ENCODE measurements at regions of chr13 and their contacts with region 1.

Region 1: DNA sequence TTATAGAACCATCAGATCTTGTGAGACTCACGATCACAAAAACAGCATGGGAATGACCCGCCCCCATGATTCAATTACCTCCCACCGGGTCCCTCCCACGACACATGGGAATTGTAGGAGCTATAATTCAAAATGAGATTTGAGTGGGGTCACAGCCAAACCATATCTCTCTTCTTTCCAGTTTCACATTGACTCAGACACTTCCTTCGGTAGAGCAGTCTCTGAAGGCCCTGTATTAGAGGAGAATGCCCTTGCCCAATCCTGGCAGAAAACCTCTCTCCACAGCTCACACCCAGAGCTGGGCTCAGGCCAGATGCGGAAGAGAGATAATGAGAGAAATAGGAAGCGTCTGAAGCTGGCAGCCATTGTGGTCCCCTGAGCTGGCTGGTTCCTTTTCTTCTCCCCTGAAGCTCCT is 72.4 kb upstream of the CLDN10 start:
- DNase-seq: peak; percentile 27
- ATAC-seq: peak; percentile 44
- H3K4me3 Mint-ChIP-seq: no peak overlapping the region
- H3K27ac Mint-ChIP-seq: no peak overlapping the region
- H3K4me1 Mint-ChIP-seq: peaks cover 8% of the 10 kb centered on the region
- H3K27me3 Mint-ChIP-seq: no peaks in the 10 kb centered on the region

Region 2: GRCh38 chr13:94660695-94661326 is 819.3 kb before region 1 on chr13:
- CTCF ChIA-PET with region 1: no interaction called
- POLR2A ChIA-PET with region 1: no interaction called
- intact Hi-C with region 1: loop called in 1 of 2 experiments (anchors 5 kb)
- DNase-seq: peak; percentile 42
- ATAC-seq: peak; percentile 24
- H3K4me3 Mint-ChIP-seq: no peak overlapping the region
- H3K27ac Mint-ChIP-seq: no peak overlapping the region
- H3K4me1 Mint-ChIP-seq: peaks cover 37% of the 10 kb centered on the region
- H3K27me3 Mint-ChIP-seq: peaks cover 31% of the 10 kb centered on the region

Region 3: GRCh38 chr13:95181586-95181985 is 298.6 kb before region 1 on chr13:
- CTCF ChIA-PET with region 1: no interaction called
- POLR2A ChIA-PET with region 1: no interaction called
- intact Hi-C with region 1: loop called in 1 of 2 experiments (anchors 1 kb)
- DNase-seq: no peak
- ATAC-seq: peak; percentile 45
- H3K4me3 Mint-ChIP-seq: no peak overlapping the region
- H3K27ac Mint-ChIP-seq: peak overlapping the region; percentile 14
- H3K4me1 Mint-ChIP-seq: peaks cover 73% of the 10 kb centered on the region
- H3K27me3 Mint-ChIP-seq: no peaks in the 10 kb centered on the region

Region 4: DNA sequence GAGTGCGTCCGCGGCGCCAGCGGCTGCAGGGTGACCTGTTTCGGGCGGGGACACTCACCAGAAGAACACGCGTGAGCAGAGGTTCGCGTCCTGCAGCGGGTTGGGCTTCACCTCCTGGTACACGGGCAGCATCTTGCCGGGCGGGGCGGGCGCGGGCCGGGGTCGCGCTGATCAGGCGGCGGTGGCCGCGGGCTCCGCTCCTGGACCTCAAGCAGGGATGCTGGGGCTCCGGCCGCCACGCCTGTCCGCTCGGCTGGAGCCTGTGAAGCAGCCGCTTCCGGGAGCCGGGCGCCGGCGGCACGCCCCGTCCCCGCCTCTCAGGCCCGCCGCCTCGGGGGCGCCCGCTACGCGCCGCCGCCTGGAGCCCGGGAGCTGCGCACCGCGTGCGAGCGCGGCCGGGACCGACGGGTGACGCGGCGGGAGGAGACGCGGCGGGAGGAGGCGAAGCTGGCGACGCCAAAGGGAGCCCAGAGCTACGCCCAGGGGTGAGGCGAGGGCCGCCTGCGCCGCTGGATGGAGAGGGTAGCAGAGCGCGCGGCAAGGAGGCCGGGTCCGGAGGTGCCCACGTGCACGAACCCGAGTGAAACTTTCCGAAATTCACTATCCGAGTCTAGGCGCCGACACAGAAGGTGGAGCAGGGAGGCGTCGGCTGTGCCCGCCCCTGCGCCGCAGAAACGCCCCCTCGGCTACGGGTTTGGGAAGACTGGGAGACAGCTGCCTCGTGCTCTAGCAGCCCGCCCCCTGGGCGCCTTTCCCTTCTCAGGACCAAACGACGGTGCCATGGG is 178.8 kb before region 1 on chr13 and contains the start of gene ABCC4:
- CTCF ChIA-PET with region 1: interaction called, 3 read pairs
- POLR2A ChIA-PET with region 1: no interaction called
- intact Hi-C with region 1: loop called (anchors 1 to 5 kb)
- DNase-seq: peak; percentile 76
- ATAC-seq: peak; percentile 81
- H3K4me3 Mint-ChIP-seq: peak within 1 kb of the TSS; percentile 78
- H3K27ac Mint-ChIP-seq: peak within 1 kb of the TSS; percentile 66
- H3K4me1 Mint-ChIP-seq: peaks cover 43% of the 10 kb centered on the region
- H3K27me3 Mint-ChIP-seq: peaks cover 8% of the 10 kb centered on the region
- total RNA-seq, gene ABCC4: 9.0 to 9.5 TPM

Measured in activated CD4-positive, alpha-beta T cell treated with anti-CD3 and anti-CD28 coated beads for 36 hours (primary cell).